Astrocyte of the cerebellum (primary cell): ENCODE measurements at regions of chr11 and their contacts with region 1.

Region 1: GRCh38 chr11:134749040-134749839 is 337.2 kb upstream of the B3GAT1 start:
- DNase-seq: no peak
- H3K4me3 ChIP-seq: no peak overlapping the region
- CTCF ChIP-seq: no peak

Region 2: GRCh38 chr11:134639586-134640358 is 109.5 kb before region 1 on chr11:
- in situ Hi-C with region 1: loop called (anchors 5 kb)
- DNase-seq: no peak
- H3K4me3 ChIP-seq: no peak overlapping the region
- CTCF ChIP-seq: no peak

Region 3: GRCh38 chr11:134701564-134702165 is 47.6 kb before region 1 on chr11:
- in situ Hi-C with region 1: no loop called
- DNase-seq: no peak
- H3K4me3 ChIP-seq: no peak overlapping the region
- CTCF ChIP-seq: no peak